Posterior vena cava (tissue), 2 donors: ENCODE measurements at regions of chr12 and their contacts with region 1.

Region 1: DNA sequence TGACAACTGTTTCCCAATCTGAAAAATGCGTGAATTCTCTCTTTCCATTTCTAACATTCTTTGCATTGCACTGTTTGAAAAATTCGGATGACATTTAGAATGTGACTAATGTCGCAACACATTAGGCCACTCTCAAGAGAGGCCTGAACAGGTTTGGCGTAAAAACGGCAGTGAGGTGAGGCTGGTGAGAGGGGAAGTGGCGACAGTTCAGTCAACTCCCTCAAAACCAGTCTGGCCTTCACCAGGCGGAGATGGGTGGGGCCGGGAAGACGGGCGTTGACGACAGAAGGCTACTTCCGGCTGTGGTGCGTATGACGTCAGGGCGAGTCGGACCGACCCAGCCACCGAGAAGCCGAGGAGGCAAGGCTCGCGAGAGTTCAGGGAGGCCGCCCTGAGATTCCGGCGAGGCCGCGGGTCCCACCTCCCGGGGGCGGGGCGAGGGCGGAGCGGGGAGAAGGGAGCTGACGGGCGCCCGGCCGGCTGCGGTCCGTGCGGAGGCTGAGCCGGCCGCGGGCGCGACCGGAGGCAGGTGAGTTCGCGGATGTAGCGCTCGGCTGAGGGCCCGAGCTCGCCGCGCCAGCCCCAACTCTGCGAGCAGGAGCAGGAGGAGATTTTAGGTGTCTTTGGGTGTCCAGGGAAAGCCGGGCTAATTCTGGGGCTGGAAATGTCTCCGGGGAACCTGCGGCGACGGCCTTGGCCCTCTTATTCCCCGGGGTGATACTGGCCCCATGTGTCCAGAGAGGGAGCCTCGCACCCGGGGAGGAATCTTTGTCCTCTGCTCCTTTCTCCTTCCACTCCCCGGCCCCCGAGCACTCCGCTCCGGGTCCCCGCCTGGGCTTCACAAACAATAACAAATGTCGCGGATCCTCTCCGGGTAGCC is at the start of gene STK38L:
- DNase-seq: peak; percentile 100
- total RNA-seq, gene STK38L: 93.3 to 221 TPM

Region 2: GRCh38 chr12:27198036-27198435 is 46.0 kb before region 1 on chr12:
- intact Hi-C with region 1: loop called in 1 of 2 experiments (anchors 5 kb)
- DNase-seq: peak; percentile 90

Region 3: DNA sequence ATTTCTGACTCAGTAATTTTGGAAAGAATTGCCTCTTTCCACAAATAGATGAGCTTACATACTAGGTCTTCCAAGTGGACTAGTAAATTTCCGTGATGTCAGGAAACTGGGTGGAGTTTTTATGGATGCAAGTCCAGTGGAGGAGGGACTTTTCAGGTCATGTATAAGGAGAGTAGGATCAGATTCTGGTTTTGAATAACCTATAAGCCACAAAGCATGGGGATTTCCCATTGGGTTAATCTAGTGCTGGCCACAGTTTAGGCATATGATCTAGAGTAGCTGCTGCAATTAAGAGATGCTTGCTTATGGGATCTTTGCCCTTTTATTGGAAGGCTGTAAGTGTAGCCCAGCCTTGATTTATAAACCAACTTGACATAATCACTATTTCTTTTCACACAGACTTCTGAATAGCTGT is 33.8 kb after region 1 on chr12:
- intact Hi-C with region 1: no loop called
- DNase-seq: no peak